PC-9 (cell line): ENCODE measurements at regions of chr22 and their contacts with region 1.

Region 1: GRCh38 chr22:27474711-27475547 is 326.6 kb downstream of the MN1 start:
- DNase-seq: peak; percentile 93 to 100
- H3K4me3 ChIP-seq: peak overlapping the region; percentile 57
- H3K27ac ChIP-seq: peak overlapping the region; percentile 98
- H3K4me1 ChIP-seq: peaks cover 47% of the 10 kb centered on the region
- H3K27me3 ChIP-seq: no peaks in the 10 kb centered on the region
- CTCF ChIP-seq: no peak

Region 2: DNA sequence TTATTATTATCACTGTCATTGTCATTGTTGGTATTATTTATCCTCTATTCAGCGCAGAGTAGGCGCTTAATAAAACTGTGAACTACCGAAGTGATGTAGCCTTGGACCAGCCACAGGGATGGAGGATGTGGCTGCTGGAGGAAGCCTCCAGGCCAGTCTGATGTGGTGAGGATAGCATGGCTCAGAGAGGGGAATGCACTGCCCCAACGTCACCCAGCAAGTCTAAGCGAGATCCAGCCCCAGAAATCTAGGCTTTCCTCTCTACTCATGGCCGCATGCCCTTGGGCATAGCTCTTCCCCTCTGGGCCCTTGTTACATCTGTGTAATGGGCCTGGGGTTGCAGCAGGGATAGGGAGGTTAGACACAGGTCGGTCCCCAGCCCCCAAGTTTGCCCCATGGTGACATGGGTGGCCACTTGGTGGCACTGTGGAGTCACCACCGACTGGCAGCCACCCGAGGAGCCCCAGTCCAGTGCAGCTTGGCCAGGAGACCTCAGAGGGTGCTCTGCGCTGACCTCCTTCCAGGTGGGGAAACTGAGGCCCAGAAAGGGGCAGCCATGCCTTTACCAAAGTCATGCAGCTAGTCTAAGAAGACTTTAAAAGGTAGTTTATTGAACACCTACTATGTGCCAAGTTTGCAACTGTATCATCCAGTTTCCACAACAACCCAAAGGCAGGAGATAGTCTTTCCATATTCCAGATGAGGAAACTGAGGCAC is 69.1 kb before region 1 on chr22:
- CTCF ChIA-PET with region 1: no interaction called
- POLR2A ChIA-PET with region 1: no interaction called
- intact Hi-C with region 1: loop called (anchors 1 kb)
- DNase-seq: peak in 1 of 2 experiments; percentile 64
- H3K4me3 ChIP-seq: no peak overlapping the region
- H3K27ac ChIP-seq: no peak overlapping the region
- H3K4me1 ChIP-seq: no peaks in the 10 kb centered on the region
- H3K27me3 ChIP-seq: no peaks in the 10 kb centered on the region
- CTCF ChIP-seq: peak; percentile 88

Region 3: GRCh38 chr22:27420817-27421361 is 54.0 kb before region 1 on chr22:
- CTCF ChIA-PET with region 1: no interaction called
- POLR2A ChIA-PET with region 1: no interaction called
- intact Hi-C with region 1: no loop called
- DNase-seq: peak in 1 of 2 experiments; percentile 44
- H3K4me3 ChIP-seq: no peak overlapping the region
- H3K27ac ChIP-seq: no peak overlapping the region
- H3K4me1 ChIP-seq: no peaks in the 10 kb centered on the region
- H3K27me3 ChIP-seq: no peaks in the 10 kb centered on the region
- CTCF ChIP-seq: no peak

Region 4: DNA sequence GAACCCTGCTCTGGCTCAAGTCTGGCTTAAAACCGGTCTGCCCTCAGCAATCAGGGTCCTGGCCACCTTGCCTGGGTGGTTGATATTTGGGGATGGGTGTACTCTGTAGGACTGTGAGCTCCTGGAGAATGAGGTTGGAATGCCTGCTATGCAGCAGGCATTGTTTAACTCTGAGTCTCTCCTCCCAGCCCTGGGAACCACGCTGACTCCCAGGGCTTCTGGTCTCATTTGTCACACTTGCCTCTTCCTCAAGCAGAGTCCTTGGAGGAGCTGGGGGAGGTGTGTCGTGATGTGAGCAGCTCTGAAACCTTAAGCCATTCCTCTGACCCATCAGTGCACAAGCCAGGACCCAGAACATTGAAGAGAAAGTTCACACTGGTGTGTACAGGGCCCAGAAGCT is 13.5 kb before region 1 on chr22:
- CTCF ChIA-PET with region 1: no interaction called
- POLR2A ChIA-PET with region 1: interaction called, 10 read pairs
- intact Hi-C with region 1: loop called (anchors 1 kb)
- DNase-seq: peak; percentile 79 to 97
- H3K4me3 ChIP-seq: no peak overlapping the region
- H3K27ac ChIP-seq: peak overlapping the region; percentile 90
- H3K4me1 ChIP-seq: peaks cover 46% of the 10 kb centered on the region
- H3K27me3 ChIP-seq: no peaks in the 10 kb centered on the region
- CTCF ChIP-seq: no peak

Region 5: GRCh38 chr22:27620367-27621104 is 145.6 kb after region 1 on chr22:
- CTCF ChIA-PET with region 1: no interaction called
- POLR2A ChIA-PET with region 1: no interaction called
- intact Hi-C with region 1: loop called (anchors 2 kb)
- DNase-seq: peak; percentile 67 to 90
- H3K4me3 ChIP-seq: no peak overlapping the region
- H3K27ac ChIP-seq: peak overlapping the region; percentile 78
- H3K4me1 ChIP-seq: peaks cover 24% of the 10 kb centered on the region
- H3K27me3 ChIP-seq: no peaks in the 10 kb centered on the region
- CTCF ChIP-seq: no peak

Region 6: DNA sequence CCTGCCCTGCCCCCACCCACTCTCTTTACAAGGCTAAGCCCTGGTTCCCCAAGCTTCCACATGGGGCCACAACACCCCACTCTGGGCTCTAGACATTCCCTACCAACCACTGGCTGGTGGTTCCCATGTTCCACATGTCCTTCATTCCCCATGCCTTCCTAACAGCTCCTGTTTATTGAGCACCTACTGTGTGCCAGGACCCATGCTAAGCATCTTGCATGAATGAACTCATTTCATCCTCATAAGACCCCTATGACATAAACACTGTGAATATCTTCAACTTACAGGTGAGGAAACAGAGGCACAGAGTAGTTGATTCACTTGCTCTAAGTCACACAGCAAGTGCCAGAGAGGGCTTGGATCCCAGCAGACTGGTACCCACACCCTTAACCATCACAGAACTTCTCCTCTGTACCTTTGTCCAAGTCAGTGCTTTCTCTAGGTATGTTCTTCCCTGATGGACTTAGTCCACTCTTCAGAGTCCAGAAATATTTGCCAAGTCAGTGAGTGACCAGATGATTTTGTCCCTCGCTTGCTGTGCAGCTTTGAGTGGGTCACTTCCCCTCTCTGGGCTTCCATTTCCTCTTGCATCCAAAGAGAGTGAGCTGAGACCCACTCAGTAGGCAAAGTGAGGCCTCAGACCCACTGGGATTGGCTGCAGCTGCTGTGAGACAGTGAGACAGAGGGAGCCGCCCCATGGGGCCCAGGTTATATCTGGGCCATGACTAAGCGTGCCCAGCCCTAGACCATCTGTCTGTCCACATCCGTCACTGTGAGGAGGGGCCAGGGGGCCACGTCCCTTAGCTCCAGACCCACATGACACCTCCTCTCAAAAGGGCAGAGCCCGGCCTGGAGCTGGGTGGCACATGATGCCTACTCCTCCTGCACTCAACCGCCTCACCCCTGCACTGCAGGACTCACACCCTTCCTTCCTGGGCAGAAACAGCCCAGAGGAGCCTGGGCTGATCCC is 194.2 kb after region 1 on chr22:
- CTCF ChIA-PET with region 1: interaction called, 10 read pairs
- POLR2A ChIA-PET with region 1: interaction called, 8 read pairs
- intact Hi-C with region 1: loop called (anchors 1 kb)
- DNase-seq: peak; percentile 87 to 94
- H3K4me3 ChIP-seq: peak overlapping the region; percentile 17; the same call in 1 of the 2 replicates
- H3K27ac ChIP-seq: peak overlapping the region; percentile 86
- H3K4me1 ChIP-seq: peaks cover 44% of the 10 kb centered on the region
- H3K27me3 ChIP-seq: no peaks in the 10 kb centered on the region
- CTCF ChIP-seq: no peak

Region 7: GRCh38 chr22:27804470-27805297 is 329.8 kb after region 1 on chr22:
- CTCF ChIA-PET with region 1: interaction called, 16 read pairs
- POLR2A ChIA-PET with region 1: no interaction called
- intact Hi-C with region 1: loop called (anchors 1 kb)
- DNase-seq: peak; percentile 52 to 56
- H3K4me3 ChIP-seq: no peak overlapping the region
- H3K27ac ChIP-seq: no peak overlapping the region
- H3K4me1 ChIP-seq: peaks cover 6% of the 10 kb centered on the region
- H3K27me3 ChIP-seq: no peaks in the 10 kb centered on the region
- CTCF ChIP-seq: peak; percentile 84